ENCODE measurements at regions of chr17 and their contacts with region 1.

Region 1: DNA sequence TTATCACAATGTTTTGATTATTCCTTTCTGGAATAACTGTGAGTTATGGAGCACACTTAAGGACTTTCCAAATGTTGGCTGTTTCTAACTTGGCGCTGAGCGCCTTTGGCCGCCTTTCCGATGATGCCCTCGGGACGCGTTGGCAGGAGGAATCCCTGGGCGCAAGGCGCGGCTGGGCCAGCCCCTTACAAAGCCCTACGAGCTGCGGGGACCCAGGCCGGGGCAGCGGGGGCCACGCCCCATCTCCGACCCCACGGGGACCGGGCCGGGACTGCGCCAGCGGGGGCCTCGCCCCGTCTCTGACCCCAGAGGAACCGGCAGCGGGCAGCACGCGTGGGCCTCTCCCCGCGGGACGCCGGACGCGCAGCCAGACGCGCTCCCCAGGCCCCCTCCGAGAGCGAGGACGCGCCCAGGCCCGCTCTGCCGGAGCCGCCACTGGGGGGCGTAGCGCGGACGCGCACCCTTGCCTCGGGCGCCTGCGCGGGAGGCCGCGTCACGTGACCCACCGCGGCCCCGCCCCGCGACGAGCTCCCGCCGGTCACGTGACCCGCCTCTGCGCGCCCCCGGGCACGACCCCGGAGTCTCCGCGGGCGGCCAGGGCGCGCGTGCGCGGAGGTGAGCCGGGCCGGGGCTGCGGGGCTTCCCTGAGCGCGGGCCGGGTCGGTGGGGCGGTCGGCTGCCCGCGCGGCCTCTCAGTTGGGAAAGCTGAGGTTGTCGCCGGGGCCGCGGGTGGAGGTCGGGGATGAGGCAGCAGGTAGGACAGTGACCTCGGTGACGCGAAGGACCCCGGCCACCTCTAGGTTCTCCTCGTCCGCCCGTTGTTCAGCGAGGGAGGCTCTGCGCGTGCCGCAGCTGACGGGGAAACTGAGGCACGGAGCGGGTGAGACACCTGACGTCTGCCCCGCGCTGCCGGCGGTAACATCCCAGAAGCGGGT is at the start of gene GAA:
- DNase-seq: peak; percentile 89
- ATAC-seq: peak; percentile 92
- H3K4me3 Mint-ChIP-seq: peak within 1 kb of the TSS; percentile 84
- H3K27ac Mint-ChIP-seq: peak within 1 kb of the TSS; percentile 78
- H3K4me1 Mint-ChIP-seq: peaks cover 24% of the 10 kb centered on the region
- H3K27me3 Mint-ChIP-seq: peaks cover 4% of the 10 kb centered on the region
- total RNA-seq, gene GAA: 31.9 to 34.7 TPM

Region 2: DNA sequence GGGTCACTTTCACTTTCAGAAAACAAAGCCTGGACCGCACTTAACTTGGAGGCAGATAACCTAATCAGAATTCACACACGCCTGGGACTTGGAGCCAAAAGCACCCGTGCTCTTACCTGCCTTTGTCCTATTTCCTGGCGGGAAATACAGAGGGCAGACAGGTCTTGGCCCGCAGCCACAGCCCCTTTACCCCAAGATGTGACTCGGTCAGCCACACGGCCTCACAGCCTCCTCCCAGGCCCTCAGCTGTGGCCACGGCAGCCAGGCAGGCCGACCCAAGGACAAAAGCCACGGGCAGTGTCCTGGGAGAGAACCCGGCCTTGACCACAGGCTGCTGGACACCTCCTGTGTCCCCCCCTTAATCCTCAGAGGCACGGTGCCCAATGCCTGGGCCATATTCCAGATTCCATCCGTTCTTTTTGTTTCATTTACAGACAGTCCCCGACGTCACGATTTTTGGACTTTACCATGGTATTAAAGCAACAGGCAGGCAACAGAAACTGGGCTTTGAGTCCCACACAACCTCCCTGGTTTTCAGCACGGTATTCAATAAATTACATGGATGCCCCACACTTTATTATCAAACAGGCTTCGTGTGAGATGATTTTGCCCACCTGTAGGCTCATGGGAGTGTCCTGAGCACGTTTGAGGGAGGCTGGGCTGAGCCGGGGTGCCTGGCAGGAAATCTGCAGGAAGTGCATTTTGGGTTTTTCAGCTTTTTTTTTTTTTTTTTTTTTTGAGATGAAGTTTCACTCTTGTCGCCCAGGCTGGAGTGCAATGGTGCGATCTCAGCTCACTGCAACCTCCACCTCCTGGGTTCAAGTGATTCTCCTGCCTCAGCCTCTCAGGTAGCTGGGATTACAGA is 29.9 kb before region 1 on chr17:
- CTCF ChIA-PET with region 1: interaction called, 16 read pairs
- DNase-seq: no peak
- ATAC-seq: no peak
- H3K4me3 Mint-ChIP-seq: no peak overlapping the region
- H3K27ac Mint-ChIP-seq: no peak overlapping the region
- H3K4me1 Mint-ChIP-seq: peaks cover 4% of the 10 kb centered on the region
- H3K27me3 Mint-ChIP-seq: peaks cover 7% of the 10 kb centered on the region

Region 3: GRCh38 chr17:80087346-80088265 is 13.7 kb before region 1 on chr17:
- CTCF ChIA-PET with region 1: interaction called, 45 read pairs
- DNase-seq: no peak
- ATAC-seq: no peak
- H3K4me3 Mint-ChIP-seq: no peak overlapping the region
- H3K27ac Mint-ChIP-seq: no peak overlapping the region
- H3K4me1 Mint-ChIP-seq: peaks cover 1% of the 10 kb centered on the region
- H3K27me3 Mint-ChIP-seq: peaks cover 9% of the 10 kb centered on the region

Region 4: DNA sequence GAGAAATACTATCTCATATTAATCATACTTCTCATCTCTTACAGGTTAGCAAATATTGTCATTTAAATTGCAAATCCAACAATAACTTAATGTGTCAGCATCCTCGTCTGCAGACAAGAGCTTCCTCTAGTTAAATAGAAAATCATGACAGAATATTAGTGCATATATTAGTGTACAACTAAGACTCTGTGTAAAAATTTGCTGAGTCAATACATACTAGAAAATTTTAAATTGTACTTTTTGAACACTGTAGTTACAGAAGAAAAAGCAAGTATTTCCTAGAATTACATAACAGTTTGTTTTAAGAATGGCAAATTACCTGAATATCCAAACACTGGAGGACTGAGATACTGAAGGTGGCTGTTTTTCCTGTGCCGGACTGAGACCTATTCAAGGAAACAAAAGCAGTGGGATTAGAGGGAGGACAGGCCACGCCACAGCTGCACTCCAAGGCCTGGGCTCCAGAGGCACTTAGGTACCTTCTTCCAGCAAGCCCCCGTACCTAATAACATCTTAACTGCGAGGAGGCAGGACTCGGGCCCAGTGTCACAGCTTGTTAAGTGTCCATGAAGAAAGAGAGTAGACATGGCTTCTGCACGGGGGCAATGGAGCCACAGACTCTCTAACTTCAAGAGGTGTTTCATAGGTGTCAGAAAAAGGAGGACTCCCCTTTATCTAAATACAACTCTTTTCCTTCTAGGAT is 40.3 kb after region 1 on chr17:
- CTCF ChIA-PET with region 1: interaction called, 22 read pairs
- DNase-seq: no peak
- ATAC-seq: no peak
- H3K4me3 Mint-ChIP-seq: no peak overlapping the region
- H3K27ac Mint-ChIP-seq: no peak overlapping the region
- H3K4me1 Mint-ChIP-seq: peaks cover 31% of the 10 kb centered on the region
- H3K27me3 Mint-ChIP-seq: no peaks in the 10 kb centered on the region

Region 5: DNA sequence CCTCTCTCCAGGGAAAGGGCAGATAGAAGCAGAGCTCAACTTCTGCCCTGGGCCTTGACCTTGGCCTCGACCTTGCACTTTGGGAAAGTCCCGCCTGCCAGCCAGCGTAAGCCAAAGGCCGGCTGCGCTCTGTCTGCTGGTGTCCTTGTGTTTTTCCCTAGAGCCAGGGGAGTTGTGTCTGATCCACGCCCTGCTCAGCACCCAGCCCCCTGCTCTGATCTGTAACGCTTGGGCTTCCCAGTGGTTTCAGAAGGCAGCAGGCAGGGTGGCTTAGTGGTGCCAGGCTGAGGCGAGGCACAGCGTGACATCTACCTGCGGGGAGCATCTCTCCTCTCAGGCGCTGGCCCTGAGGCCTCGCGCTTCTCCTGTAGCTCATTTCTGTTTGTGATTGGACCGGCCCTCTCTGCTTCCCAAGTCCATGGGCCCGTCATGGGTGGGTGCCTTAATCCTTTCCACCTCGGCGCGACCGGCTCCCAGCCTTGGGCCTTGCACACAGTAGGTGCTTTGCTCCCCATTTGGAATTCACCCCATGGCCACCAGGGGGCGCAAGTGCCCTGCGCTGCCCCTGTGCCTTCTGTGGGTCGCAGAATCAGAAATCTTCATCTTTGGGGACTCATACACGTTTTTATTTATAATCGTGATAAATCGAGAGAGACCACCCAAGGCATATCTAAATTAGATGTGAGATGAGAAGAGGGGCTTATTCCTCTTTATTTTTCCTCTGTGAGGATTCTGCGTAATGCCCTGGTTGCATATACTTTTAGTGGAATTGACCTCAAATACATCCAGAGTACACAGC is 94.7 kb after region 1 on chr17:
- CTCF ChIA-PET with region 1: interaction called, 10 read pairs
- DNase-seq: peak; percentile 60
- ATAC-seq: peak; percentile 64
- H3K4me3 Mint-ChIP-seq: no peak overlapping the region
- H3K27ac Mint-ChIP-seq: no peak overlapping the region
- H3K4me1 Mint-ChIP-seq: no peaks in the 10 kb centered on the region
- H3K27me3 Mint-ChIP-seq: peaks cover 20% of the 10 kb centered on the region

Region 6: DNA sequence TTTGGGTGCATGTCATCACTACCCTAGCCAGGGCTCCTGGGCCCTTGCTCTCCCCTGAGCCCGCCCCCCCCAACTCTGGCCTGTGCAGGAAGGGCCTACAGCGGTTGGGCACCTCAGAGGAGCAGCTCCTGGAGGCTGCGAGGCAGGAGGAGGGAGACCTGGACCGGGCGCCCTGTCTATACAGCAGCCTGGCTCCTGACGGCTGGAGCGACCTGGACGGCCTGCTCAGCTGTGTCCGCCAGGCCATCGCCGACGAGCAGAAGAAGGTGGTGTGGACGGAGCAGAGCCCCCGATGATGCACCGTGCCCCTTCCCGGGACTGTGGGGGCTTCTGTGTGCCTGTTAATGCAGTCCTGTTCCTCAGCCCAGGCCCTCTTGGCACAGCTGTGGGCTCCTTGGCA is 106.8 kb after region 1 on chr17:
- CTCF ChIA-PET with region 1: no interaction called
- DNase-seq: no peak
- ATAC-seq: no peak
- H3K4me3 Mint-ChIP-seq: no peak overlapping the region
- H3K27ac Mint-ChIP-seq: no peak overlapping the region
- H3K4me1 Mint-ChIP-seq: no peaks in the 10 kb centered on the region
- H3K27me3 Mint-ChIP-seq: no peaks in the 10 kb centered on the region